RWPE1 (cell line): ENCODE measurements at regions of chrX and their contacts with region 1.

Region 1: GRCh38 chrX:153609917-153610428 is 11.0 kb upstream of the CCNQ start:
- DNase-seq: peak; percentile 38
- H3K27ac ChIP-seq: no peak overlapping the region
- CTCF ChIP-seq: peak; percentile 71

Region 2: DNA sequence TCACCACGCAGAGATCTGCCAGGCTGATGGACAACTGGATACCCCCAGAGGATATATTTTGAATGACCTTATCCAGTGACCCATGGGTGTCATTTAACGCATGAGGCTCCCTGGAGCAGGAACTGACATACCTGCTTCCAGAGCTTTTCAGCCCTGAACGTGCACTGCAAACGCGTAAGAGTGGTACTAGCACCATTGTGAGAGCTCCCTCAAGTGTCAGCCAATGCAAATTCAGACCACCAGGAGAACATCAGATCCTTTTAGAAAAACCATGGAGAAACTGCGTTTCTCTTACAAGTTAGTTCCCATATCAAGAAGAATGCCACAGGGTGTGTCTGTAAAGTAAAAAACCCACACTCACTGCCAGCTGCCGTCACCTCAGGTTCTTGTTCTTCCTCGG is 171.4 kb before region 1 on chrX:
- CTCF ChIA-PET with region 1: no interaction called
- POLR2A ChIA-PET with region 1: no interaction called
- DNase-seq: no peak
- H3K27ac ChIP-seq: no peak overlapping the region
- CTCF ChIP-seq: no peak; the same call in 1 of the 2 replicates

Region 3: DNA sequence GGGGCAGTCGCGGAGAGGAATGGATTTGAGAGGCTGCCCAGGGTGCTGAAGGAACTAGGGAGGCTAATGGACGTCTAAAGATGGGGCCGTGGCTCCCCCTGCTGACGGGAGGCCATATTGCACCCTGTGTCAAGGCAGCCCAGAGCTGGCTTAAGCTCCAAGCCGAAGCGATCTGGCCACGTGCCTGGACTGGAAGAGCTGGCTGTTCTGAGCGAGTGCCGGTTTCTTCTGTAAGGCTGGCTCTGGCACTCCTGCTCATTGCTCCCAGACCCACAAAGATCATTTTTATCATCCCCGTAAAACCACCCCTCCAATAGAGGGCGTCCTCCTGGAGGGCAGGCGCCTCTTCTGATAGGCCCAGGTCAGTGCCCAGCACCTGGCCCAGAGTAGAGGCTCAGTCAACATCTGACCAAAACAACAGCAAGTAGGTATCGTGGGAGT is 58.0 kb after region 1 on chrX:
- CTCF ChIA-PET with region 1: interaction called, 12 read pairs
- POLR2A ChIA-PET with region 1: no interaction called
- DNase-seq: peak; percentile 62
- H3K27ac ChIP-seq: no peak overlapping the region
- CTCF ChIP-seq: peak; percentile 62